Heart left ventricle (tissue), 16 donors: ENCODE measurements at regions of chr12 and their contacts with region 1.

Region 1: GRCh38 chr12:46382964-46383653 is 10.5 kb upstream of the SLC38A2 start:
- DNase-seq: peak; percentile 98 to 99 (median 98)
- ATAC-seq: peak; percentile 92 to 95 (median 93)
- H3K4me3 ChIP-seq: peak overlapping the region; percentile 41 to 82 (median 74)
- H3K27ac ChIP-seq: peak overlapping the region; percentile 97 to 100 (median 100)
- H3K4me1 ChIP-seq: peaks cover 0 to 52% (median 42%) of the 10 kb centered on the region in 12 donors
- H3K27me3 ChIP-seq: no peaks in the 10 kb centered on the region
- CTCF ChIP-seq: peak in 8 of 12 donors; percentile 14 to 48 (median 28)
- POLR2A ChIP-seq: peak; percentile 19 to 93

Region 2: GRCh38 chr12:46372544-46373110 is 10.5 kb before region 1 on chr12 and contains the start of gene SLC38A2:
- intact Hi-C with region 1: loop called in 2 of 10 experiments (anchors 1 kb)
- DNase-seq: peak; percentile 98 to 99 (median 99)
- ATAC-seq: peak; percentile 95 to 97 (median 96)
- H3K4me3 ChIP-seq: peak within 1 kb of the TSS; percentile 73 to 95 (median 88)
- H3K27ac ChIP-seq: peak within 1 kb of the TSS; percentile 93 to 100 (median 97)
- H3K4me1 ChIP-seq: peaks cover 6 to 46% (median 35%) of the 10 kb centered on the region in 12 donors
- H3K27me3 ChIP-seq: no peaks in the 10 kb centered on the region
- CTCF ChIP-seq: no peak
- POLR2A ChIP-seq: peak; percentile 97 to 100
- total RNA-seq, gene SLC38A2: 82.1 to 373 (median 161) TPM

Region 3: GRCh38 chr12:46459861-46460545 is 76.9 kb after region 1 on chr12:
- intact Hi-C with region 1: loop called in 1 of 10 experiments (anchors 10 kb)
- DNase-seq: peak in 1 of 5 donors; percentile 13
- ATAC-seq: peak in 3 of 4 donors; percentile 23 to 57 (median 49)
- H3K4me3 ChIP-seq: no peak overlapping the region
- H3K27ac ChIP-seq: peak overlapping the region in 5 of 12 donors; percentile 6 to 47 (median 33)
- H3K4me1 ChIP-seq: peaks cover 0 to 73% (median 36%) of the 10 kb centered on the region in 12 donors
- H3K27me3 ChIP-seq: no peaks in the 10 kb centered on the region
- CTCF ChIP-seq: no peak
- POLR2A ChIP-seq: no peak

Region 4: GRCh38 chr12:46473634-46474329 is 90.7 kb after region 1 on chr12:
- intact Hi-C with region 1: loop called in 7 of 10 experiments (anchors 1 to 10 kb)
- DNase-seq: peak; percentile 70 to 79 (median 78)
- ATAC-seq: peak; percentile 70 to 92 (median 92)
- H3K4me3 ChIP-seq: peak overlapping the region in 2 of 12 donors; percentile 6 to 12
- H3K27ac ChIP-seq: peak overlapping the region; percentile 56 to 92 (median 83)
- H3K4me1 ChIP-seq: peaks cover 0 to 48% (median 28%) of the 10 kb centered on the region in 12 donors
- H3K27me3 ChIP-seq: no peaks in the 10 kb centered on the region
- CTCF ChIP-seq: no peak
- POLR2A ChIP-seq: no peak

Region 5: DNA sequence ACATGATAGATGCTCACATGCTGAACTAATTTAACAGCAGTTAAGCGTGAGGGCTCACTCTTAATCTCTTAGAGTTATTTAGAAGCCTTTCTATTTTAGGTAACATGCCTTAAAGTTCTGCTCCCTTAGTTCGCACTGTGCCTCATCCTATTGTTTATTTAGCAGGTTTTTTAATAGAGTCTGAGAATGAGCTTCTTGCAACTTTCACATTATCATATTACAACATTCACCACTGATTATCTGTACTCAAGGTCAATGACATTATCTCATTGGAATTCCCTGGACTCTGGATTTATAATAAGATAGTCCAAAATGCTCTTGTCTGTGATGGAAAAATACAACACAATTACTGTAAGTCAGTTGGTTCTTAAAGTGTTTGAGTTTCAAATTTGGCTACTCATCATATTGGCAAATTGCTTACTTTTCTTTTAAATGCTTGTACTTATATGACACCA is 173.0 kb after region 1 on chr12:
- intact Hi-C with region 1: loop called in 3 of 10 experiments (anchors 5 to 10 kb)
- DNase-seq: no peak
- ATAC-seq: peak; percentile 87 to 95 (median 93)
- H3K4me3 ChIP-seq: no peak overlapping the region
- H3K27ac ChIP-seq: peak overlapping the region in 11 of 12 donors; percentile 23 to 81 (median 62)
- H3K4me1 ChIP-seq: peaks cover 0 to 47% (median 21%) of the 10 kb centered on the region in 12 donors
- H3K27me3 ChIP-seq: no peaks in the 10 kb centered on the region
- CTCF ChIP-seq: no peak
- POLR2A ChIP-seq: no peak

Region 6: GRCh38 chr12:46577063-46577776 is 194.1 kb after region 1 on chr12:
- intact Hi-C with region 1: no loop called
- DNase-seq: no peak
- ATAC-seq: no peak
- H3K4me3 ChIP-seq: no peak overlapping the region
- H3K27ac ChIP-seq: no peak overlapping the region
- H3K4me1 ChIP-seq: peaks cover 0 to 33% (median 11%) of the 10 kb centered on the region in 12 donors
- H3K27me3 ChIP-seq: no peaks in the 10 kb centered on the region
- CTCF ChIP-seq: no peak
- POLR2A ChIP-seq: no peak